ENCODE measurements at regions of chr17 and their contacts with region 1.

Region 1: DNA sequence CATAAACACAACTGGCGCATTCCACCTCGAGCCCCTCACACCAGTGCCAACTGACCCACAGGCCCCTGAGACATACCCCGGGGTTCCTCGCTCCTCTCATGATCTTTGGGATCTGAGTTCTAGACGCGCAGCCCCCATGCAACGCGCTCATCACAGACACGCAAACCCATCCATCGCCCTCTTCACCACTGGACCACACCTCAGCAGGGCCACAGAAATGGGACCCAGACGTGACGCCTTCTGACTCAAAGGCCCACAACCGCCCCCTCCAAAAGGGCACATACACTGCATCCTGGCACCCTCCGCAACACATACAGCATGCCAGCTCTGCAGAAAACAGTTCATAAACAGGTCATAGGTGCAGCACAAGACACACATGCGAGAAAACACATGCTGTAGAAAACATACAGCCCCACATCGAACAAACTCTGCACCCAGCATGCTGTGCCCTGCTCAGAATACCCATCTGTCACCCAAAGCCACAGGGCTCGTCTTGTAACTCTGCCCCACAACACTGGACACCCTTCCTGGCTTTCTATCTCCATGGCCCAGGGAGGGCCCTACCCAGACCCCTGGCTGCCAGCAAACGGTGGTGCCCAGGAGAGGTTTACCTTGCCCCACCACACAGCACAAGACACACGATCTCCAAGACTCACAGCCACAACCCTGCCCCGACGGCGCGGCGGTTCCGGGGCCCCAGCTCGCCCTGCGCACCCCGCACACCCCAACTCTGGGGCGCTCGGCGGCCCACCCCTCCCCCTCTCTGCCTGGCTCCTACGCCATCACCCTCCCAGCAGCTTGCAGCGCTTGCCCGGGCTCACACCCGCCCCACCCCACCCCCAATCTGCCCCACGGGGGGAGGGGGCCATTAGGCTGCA is 916 bp downstream of the ZBTB4 start:
- DNase-seq: peak; percentile 46 to 88 (median 70)
- ATAC-seq: peak; percentile 46
- H3K4me3 ChIP-seq: peak overlapping the region; percentile 77
- H3K4me3 Mint-ChIP-seq: peak overlapping the region; percentile 91
- H3K27ac ChIP-seq: peak overlapping the region; percentile 70 to 99
- H3K27ac Mint-ChIP-seq: peak overlapping the region; percentile 93
- H3K4me1 ChIP-seq: peaks cover 81% of the 10 kb centered on the region
- H3K4me1 Mint-ChIP-seq: peaks cover 60% of the 10 kb centered on the region
- H3K27me3 ChIP-seq: no peaks in the 10 kb centered on the region
- H3K27me3 Mint-ChIP-seq: no peaks in the 10 kb centered on the region
- CTCF ChIP-seq: no peak

Region 2: DNA sequence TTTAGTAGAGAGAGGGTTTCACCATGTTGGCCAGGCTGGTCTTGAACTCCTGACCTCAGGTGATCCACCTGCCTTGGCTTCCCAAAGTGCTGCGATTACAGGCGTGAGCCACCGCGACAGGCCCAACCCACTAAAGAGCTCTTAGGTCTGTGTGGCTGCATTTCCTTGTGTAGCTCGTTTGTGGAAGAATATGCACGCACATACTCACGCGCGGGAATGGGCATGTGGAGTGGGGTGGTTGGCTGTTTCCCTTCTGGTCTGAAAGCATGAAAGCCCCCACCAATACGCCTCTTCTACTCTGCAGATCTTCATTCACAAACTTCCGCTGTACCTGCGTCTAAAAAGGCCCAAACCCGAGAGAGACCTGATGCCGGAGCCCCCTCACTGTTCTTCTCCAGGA is 23.5 kb before region 1 on chr17:
- CTCF ChIA-PET with region 1: no interaction called
- POLR2A ChIA-PET with region 1: interaction called, 137 read pairs
- intact Hi-C with region 1: loop called (anchors 1 to 2 kb)
- DNase-seq: no peak
- ATAC-seq: no peak
- H3K4me3 ChIP-seq: peak overlapping the region; percentile 94
- H3K4me3 Mint-ChIP-seq: peak overlapping the region; percentile 94
- H3K27ac ChIP-seq: peak overlapping the region in 1 of 2 donors; percentile 52
- H3K27ac Mint-ChIP-seq: peak overlapping the region; percentile 85
- H3K4me1 ChIP-seq: peaks cover 23% of the 10 kb centered on the region
- H3K4me1 Mint-ChIP-seq: peaks cover 39% of the 10 kb centered on the region
- H3K27me3 ChIP-seq: no peaks in the 10 kb centered on the region
- H3K27me3 Mint-ChIP-seq: no peaks in the 10 kb centered on the region
- CTCF ChIP-seq: no peak

Region 3: DNA sequence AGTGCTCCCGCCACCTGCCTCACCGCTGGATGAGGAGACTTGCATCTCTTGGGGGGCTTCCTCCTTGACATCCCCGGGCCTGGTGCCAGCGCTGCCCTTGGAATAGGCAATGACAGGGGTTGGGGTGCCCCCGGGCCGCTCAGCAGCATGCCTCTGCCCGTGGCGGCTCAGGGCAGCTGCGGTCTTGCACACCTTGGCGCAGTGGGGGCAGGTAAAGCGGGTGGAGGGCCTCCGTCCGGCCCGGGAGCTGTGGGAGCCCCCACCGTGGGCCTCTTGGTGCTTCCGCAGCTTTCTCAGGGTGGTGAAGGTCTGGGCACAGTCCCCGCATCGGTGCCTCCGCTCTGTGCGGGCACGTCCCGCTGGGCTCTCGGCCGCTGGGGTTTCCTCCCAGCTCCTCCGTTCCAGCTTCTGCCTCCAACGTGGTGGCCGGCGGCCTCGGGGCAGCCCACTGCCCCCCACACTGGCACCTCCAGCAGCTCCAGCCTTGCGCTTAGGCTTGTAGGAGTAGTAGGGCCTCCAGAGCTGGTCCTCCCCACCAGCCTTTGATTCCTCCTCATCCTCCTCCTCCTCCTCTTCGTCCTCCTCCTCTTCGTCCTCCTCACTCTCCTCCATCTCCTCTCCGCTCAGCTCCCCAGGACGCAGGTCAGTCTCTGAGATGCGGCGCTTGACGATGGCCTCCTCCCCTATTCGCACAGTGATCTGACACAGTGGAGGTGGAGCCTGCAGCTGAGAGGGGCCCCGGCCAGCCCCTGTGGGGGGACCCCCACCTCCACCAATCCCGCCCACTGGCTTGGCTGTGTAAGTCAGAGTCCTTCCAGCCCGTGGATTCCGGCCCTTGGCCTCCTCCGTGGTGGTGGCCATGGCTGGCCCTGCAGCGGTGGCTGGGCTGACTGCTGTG is 15.8 kb before region 1 on chr17:
- CTCF ChIA-PET with region 1: no interaction called
- POLR2A ChIA-PET with region 1: interaction called, 137 read pairs
- intact Hi-C with region 1: loop called in 1 of 2 experiments (anchors 2 kb)
- DNase-seq: peak in 1 of 14 experiments; percentile 19
- ATAC-seq: no peak
- H3K4me3 ChIP-seq: no peak overlapping the region
- H3K4me3 Mint-ChIP-seq: no peak overlapping the region
- H3K27ac ChIP-seq: no peak overlapping the region
- H3K27ac Mint-ChIP-seq: no peak overlapping the region
- H3K4me1 ChIP-seq: peaks cover 1% of the 10 kb centered on the region
- H3K4me1 Mint-ChIP-seq: peaks cover under 1% of the 10 kb centered on the region
- H3K27me3 ChIP-seq: no peaks in the 10 kb centered on the region
- H3K27me3 Mint-ChIP-seq: no peaks in the 10 kb centered on the region
- CTCF ChIP-seq: no peak

Region 4: GRCh38 chr17:7503521-7503920 is 25.0 kb after region 1 on chr17:
- CTCF ChIA-PET with region 1: no interaction called
- POLR2A ChIA-PET with region 1: no interaction called
- intact Hi-C with region 1: no loop called
- DNase-seq: no peak
- ATAC-seq: no peak
- H3K4me3 ChIP-seq: no peak overlapping the region
- H3K4me3 Mint-ChIP-seq: no peak overlapping the region
- H3K27ac ChIP-seq: no peak overlapping the region
- H3K27ac Mint-ChIP-seq: no peak overlapping the region
- H3K4me1 ChIP-seq: no peaks in the 10 kb centered on the region
- H3K4me1 Mint-ChIP-seq: no peaks in the 10 kb centered on the region
- H3K27me3 ChIP-seq: no peaks in the 10 kb centered on the region
- H3K27me3 Mint-ChIP-seq: no peaks in the 10 kb centered on the region
- CTCF ChIP-seq: no peak

Measured in CD4-positive, alpha-beta T cell (primary cell).